Heart right ventricle (tissue), 16 donors: ENCODE measurements at regions of chr4 and their contacts with region 1.

Region 1: DNA sequence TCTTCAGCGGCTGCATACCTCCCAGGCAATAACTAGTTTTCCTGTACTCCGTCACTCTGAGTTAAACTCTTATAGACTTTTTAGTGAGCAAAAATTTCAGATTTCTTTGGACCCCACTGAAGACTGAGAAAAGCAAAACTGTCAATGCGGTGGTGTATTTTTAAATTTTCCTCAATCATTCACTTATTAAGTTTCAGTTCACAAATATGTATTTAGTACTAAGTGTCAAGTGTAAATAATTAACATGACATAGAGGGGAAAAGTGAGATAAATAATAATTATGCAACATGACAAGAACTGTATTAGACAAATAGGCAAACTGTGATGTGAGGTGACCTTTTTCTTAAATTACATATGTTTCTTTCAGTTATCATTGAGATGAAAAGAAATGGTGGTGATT is 124.4 kb downstream of the NAF1 start:
- DNase-seq: no peak
- ATAC-seq: no peak
- H3K4me3 ChIP-seq: no peak overlapping the region
- H3K27ac ChIP-seq: no peak overlapping the region
- H3K4me1 ChIP-seq: no peaks in the 10 kb centered on the region
- H3K27me3 ChIP-seq: no peaks in the 10 kb centered on the region
- CTCF ChIP-seq: no peak

Region 2: DNA sequence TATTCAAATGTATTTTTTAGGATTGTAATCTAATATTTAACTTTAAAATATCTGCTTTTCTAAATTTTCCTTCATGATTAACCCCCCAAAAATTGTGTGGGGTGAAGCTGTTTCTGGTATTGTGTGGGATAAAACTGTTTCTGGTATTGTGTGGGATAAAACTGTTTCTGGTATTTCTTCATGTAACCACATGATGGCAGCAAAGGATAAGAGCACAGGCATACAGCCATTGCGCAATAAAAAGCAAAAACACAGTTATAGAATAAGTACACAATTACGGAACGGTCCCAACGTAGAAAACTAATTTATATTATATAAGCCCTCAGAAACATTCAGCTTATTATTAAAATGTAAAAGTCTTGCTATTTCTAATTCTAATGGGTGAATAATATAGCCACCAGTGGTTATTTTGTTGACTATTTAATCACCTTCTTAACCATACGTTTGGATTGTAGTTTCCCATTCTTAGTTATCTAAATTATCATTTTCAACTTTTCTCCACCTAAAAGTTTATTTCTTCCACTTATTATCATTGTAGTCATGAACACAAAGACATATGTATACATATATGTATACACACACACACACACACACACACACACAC is 544.6 kb before region 1 on chr4:
- intact Hi-C with region 1: loop called in 4 of 10 experiments (anchors 5 to 10 kb)
- DNase-seq: no peak
- ATAC-seq: peak; percentile 52 to 88 (median 76)
- H3K4me3 ChIP-seq: peak overlapping the region in 5 of 10 donors; percentile 12 to 32 (median 26)
- H3K27ac ChIP-seq: peak overlapping the region in 1 of 10 donors; percentile 12
- H3K4me1 ChIP-seq: peaks cover 0 to 5% (median 0%) of the 10 kb centered on the region in 9 donors
- H3K27me3 ChIP-seq: no peaks in the 10 kb centered on the region
- CTCF ChIP-seq: peak; percentile 68 to 92 (median 81)

Region 3: GRCh38 chr4:162645381-162645780 is 396.9 kb before region 1 on chr4:
- intact Hi-C with region 1: loop called in 6 of 10 experiments (anchors 2 to 10 kb)
- DNase-seq: no peak
- ATAC-seq: no peak
- H3K4me3 ChIP-seq: no peak overlapping the region
- H3K27ac ChIP-seq: no peak overlapping the region
- H3K4me1 ChIP-seq: no peaks in the 10 kb centered on the region
- H3K27me3 ChIP-seq: no peaks in the 10 kb centered on the region
- CTCF ChIP-seq: peak in 7 of 9 donors; percentile 33 to 65 (median 53)